ENCODE measurements at regions of chr14 and their contacts with region 1.

Region 1: GRCh38 chr14:63470962-63471793 is 72.0 kb downstream of the PPP2R5E start:
- DNase-seq: no peak
- H3K4me3 ChIP-seq: no peak overlapping the region
- H3K27ac ChIP-seq: peak overlapping the region in 1 of 2 donors; percentile 39
- H3K4me1 ChIP-seq: peaks cover 0 to 5% of the 10 kb centered on the region in 2 donors
- H3K27me3 ChIP-seq: no peaks in the 10 kb centered on the region
- CTCF ChIP-seq: no peak
- POLR2A ChIP-seq: no peak

Region 2: GRCh38 chr14:63006531-63006930 is 464.6 kb before region 1 on chr14:
- intact Hi-C with region 1: no loop called
- DNase-seq: no peak
- H3K4me3 ChIP-seq: no peak overlapping the region
- H3K27ac ChIP-seq: no peak overlapping the region
- H3K4me1 ChIP-seq: no peaks in the 10 kb centered on the region
- H3K27me3 ChIP-seq: no peaks in the 10 kb centered on the region
- CTCF ChIP-seq: no peak
- POLR2A ChIP-seq: no peak

Region 3: GRCh38 chr14:63448841-63449240 is 22.3 kb before region 1 on chr14:
- intact Hi-C with region 1: loop called (anchors 1 kb)
- DNase-seq: no peak
- H3K4me3 ChIP-seq: no peak overlapping the region
- H3K27ac ChIP-seq: no peak overlapping the region
- H3K4me1 ChIP-seq: no peaks in the 10 kb centered on the region
- H3K27me3 ChIP-seq: no peaks in the 10 kb centered on the region
- CTCF ChIP-seq: no peak
- POLR2A ChIP-seq: no peak

Region 4: DNA sequence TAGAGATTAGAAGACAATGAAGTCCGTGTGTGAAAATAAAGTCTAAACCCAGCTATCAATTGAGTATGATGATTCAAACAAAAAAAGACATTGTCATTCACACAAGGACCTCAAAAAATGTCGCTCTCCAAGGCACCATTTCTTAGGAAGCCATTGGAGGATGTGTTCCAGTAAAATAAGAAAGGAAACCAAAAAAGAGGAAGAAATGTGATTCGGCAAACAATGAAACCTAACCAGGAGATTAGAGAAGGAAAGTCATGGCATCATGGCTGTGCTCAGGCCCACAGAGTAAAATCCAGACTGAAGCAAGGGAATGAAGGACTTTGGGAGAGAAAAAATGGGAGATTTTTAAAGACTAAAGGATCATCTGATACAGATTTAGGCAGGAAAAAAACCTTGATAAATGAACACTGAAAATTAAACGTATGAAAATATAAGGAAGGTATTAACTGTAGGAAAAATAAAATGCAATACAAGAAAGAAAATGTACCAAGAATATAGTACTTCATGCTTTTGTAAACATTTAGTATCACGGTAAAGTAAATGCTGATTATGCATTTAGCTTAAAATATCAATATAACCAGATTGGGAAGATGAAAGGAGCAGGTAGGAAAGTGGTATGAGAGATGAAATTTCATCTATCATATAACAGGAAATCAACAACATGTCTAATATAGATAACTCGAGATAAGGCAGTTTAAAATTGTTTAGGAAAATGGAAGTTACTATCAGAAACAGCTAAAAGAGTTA is 878.7 kb after region 1 on chr14:
- intact Hi-C with region 1: no loop called
- DNase-seq: no peak
- H3K4me3 ChIP-seq: no peak overlapping the region
- H3K27ac ChIP-seq: no peak overlapping the region
- H3K4me1 ChIP-seq: no peaks in the 10 kb centered on the region
- H3K27me3 ChIP-seq: no peaks in the 10 kb centered on the region
- CTCF ChIP-seq: no peak
- POLR2A ChIP-seq: no peak